GM13976 (cell line): ENCODE measurements at regions of chr9 and their contacts with region 1.

Region 1: GRCh38 chr9:109244157-109245132 is 76.4 kb downstream of the EPB41L4B start:
- DNase-seq: peak; percentile 73
- CTCF ChIP-seq: peak; percentile 86

Region 2: GRCh38 chr9:109401168-109401989 is 156.9 kb after region 1 on chr9:
- in situ Hi-C with region 1: loop called (anchors 10 kb)
- DNase-seq: peak; percentile 67
- CTCF ChIP-seq: peak; percentile 83

Region 3: DNA sequence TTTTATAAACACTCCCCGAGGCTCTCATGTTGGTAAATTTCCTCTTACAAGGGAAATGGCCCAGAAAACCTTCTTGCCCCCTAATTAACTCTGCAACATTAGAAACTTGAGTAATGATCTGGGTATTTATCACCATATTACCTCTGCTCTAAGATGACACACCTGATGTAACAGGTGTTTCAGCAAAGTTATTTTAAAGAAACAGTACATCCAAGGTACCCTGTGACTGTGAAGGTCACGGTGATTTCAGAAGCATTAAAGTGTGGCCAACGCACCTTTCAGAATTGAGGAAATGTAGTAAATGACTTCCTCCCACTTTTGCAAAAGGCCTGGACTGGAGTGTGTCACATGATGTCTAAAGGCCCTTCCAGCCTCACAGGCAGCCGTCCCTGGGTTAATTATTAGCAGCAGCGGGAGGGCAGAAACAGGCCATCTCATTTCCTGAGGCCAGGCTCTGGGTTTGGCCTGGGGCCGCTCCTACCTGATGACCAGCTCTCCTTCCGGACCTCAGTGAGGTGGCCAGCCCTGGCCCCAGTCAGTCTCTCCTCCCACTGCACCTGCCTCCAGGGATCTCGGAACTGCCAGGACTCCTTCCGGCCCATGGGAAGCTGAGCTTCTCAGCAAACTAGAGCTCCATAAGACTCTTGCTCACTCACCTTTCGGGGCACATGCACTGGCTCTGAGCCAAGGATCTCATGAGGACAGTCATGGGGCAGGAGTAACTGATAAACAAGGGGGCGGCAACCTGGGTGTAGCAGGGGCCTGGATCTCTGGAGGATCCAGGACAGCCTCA is 233.0 kb after region 1 on chr9:
- in situ Hi-C with region 1: no loop called
- DNase-seq: peak; percentile 44
- CTCF ChIP-seq: no peak

Region 4: DNA sequence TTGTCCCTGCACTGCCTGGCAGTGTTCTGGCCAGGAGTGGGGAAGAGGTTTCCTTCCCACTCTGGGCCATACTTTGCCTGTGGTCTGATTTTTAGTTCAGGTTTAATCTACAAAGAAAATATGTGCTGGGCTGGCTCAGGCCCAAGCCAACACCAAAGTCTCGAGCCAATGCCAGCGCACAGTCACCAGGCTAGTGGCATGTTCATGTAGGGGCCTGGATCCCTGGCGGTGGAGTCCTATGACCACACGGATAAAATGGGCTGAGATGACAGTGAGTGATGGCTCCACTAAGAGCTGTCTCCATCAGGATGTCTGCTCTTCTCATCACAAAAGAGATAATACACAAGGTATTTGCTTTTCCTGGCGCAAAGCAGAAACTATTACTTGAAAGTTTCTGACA is 346.5 kb after region 1 on chr9:
- in situ Hi-C with region 1: no loop called
- DNase-seq: no peak
- CTCF ChIP-seq: no peak